Activated T-helper 2 cell treated with anti-CD3 and anti-CD28 coated beads, Interferon-gamma antibody, Interleukin-2, Interleukin-4, amounts not matched to agents 10 μg/mL and 5 μg/mL and 100 μg/mL, durations not matched to agents 14 hours and 24 hours and 36 hours (primary cell): ENCODE measurements at regions of chr3 and their contacts with region 1.

Region 1: GRCh38 chr3:56682462-56683121 is 473 bp downstream of the TASOR start:
- DNase-seq: peak; percentile 76
- H3K4me3 Mint-ChIP-seq: peak overlapping the region; percentile 99
- H3K27ac Mint-ChIP-seq: peak overlapping the region; percentile 98
- H3K4me1 Mint-ChIP-seq: peaks cover 34% of the 10 kb centered on the region
- H3K27me3 Mint-ChIP-seq: no peaks in the 10 kb centered on the region

Region 2: DNA sequence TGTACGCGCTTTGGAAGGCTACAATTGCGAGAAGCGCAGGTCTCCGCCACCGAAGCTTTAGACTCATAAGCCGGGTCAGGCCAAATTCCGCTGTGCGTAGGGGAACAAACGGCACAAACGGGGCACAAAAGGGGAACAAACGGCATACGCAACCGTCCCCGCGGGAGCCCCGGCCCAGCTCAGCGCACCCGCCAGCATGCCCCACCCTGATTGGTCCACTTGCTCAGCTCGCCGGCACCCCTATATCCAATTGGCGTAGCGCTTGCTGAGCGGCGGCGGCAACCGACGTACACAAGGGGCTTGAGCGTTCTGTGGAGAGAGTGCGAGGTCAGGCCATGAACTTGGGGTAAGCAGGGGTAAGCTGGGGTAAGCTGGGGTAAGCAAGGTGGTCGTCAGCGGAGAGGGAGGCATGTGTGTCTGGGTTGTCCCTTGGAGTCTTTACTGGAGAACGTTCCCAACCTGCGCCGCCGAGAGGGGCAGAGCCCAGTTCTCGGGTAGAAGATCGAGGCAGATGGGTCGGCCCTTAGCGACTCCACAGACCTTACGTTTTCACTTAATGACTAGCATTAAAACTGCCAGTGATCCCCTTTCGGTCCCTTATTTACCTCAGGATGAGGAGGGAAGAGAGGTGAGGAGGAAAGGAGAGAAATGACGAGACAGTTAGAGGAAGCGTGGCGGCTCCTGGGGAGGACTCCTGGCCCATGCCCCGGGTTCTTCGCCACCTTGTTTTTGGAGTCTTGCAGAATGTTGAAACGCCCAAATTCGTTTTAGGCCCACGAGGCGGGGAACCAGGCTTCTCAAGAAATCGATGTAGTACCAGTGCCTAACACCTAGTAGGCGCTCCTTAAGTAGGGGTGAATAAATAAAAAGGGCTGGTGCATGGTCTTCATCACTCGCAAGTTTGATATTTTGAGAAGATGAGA is 125.4 kb before region 1 on chr3 and contains the start of gene CCDC66:
- intact Hi-C with region 1: loop called (anchors 1 kb)
- DNase-seq: peak; percentile 91
- H3K4me3 Mint-ChIP-seq: peak within 1 kb of the TSS; percentile 98
- H3K27ac Mint-ChIP-seq: peak within 1 kb of the TSS; percentile 99
- H3K4me1 Mint-ChIP-seq: peaks cover 24% of the 10 kb centered on the region
- H3K27me3 Mint-ChIP-seq: peaks cover 19% of the 10 kb centered on the region
- total RNA-seq, gene CCDC66: 34.1 and 38.1 TPM in 2 replicates

Region 3: GRCh38 chr3:56783644-56784447 is 101.3 kb after region 1 on chr3:
- intact Hi-C with region 1: loop called (anchors 2 kb)
- DNase-seq: peak; percentile 70
- H3K4me3 Mint-ChIP-seq: peak overlapping the region; percentile 76
- H3K27ac Mint-ChIP-seq: peak overlapping the region; percentile 95
- H3K4me1 Mint-ChIP-seq: peaks cover 80% of the 10 kb centered on the region
- H3K27me3 Mint-ChIP-seq: no peaks in the 10 kb centered on the region